A673 (cell line): ENCODE measurements at regions of chr2 and their contacts with region 1.

Region 1: GRCh38 chr2:181592648-181593047 is 64.3 kb downstream of the CERKL start:
- DNase-seq: no peak
- H3K4me3 ChIP-seq: no peak overlapping the region
- H3K27ac ChIP-seq: no peak overlapping the region
- H3K4me1 ChIP-seq: no peaks in the 10 kb centered on the region
- H3K27me3 ChIP-seq: no peaks in the 10 kb centered on the region
- CTCF ChIP-seq: no peak

Region 2: DNA sequence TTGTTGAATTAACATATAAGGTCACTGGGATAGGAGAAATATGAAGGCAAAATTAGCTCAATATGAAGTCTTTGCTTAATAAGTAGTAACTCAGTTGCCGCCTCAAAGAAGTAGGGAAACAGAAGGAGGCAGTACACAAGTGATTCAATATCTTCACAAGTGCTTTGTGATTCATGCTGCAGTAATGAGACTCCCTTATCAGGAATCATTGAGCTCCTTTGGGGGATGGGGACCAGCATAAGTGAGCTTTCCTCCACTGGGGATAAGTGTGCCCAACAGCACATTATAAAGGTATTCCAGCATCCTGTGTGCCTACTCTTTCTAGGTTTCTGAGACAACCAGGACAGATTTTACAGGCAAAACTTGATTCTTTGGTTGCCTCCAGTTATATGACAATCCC is 935.6 kb before region 1 on chr2:
- CTCF ChIA-PET with region 1: interaction called, 12 read pairs
- POLR2A ChIA-PET with region 1: no interaction called
- intact Hi-C with region 1: no loop called
- DNase-seq: no peak
- H3K4me3 ChIP-seq: no peak overlapping the region
- H3K27ac ChIP-seq: no peak overlapping the region
- H3K4me1 ChIP-seq: no peaks in the 10 kb centered on the region
- H3K27me3 ChIP-seq: no peaks in the 10 kb centered on the region
- CTCF ChIP-seq: no peak

Region 3: DNA sequence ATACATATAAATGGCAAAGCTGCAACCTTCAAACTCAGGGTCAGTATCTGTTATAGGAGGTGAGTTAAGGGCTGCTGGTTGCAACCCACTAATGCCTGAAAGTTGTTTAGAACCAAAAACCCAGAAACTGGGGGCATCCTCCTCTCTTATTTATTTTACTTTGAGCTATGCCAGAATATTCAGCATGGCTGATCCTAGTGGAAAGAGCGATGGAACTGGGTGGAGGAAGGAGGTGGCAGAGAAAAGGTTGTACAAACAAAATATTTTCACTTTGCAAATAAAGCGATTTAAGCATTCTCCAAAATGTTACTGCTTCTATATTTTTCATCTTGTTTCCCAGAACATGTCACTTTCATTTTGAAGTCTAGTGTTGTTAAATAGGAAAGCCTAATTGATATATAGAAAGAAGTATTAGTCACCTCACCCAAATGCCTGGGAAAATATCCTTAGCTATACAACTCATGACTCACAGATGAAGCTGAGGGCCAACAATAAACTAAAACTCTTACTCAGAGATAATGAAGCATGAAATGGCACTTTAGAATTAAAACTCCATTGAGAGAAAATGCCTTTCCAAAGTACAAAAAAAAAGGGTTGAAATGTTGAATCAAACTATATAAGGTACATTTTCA is 863.6 kb before region 1 on chr2:
- CTCF ChIA-PET with region 1: no interaction called
- POLR2A ChIA-PET with region 1: no interaction called
- intact Hi-C with region 1: no loop called
- DNase-seq: peak; percentile 70
- H3K4me3 ChIP-seq: no peak overlapping the region
- H3K27ac ChIP-seq: no peak overlapping the region
- H3K4me1 ChIP-seq: peaks cover 15% of the 10 kb centered on the region
- H3K27me3 ChIP-seq: no peaks in the 10 kb centered on the region
- CTCF ChIP-seq: no peak

Region 4: DNA sequence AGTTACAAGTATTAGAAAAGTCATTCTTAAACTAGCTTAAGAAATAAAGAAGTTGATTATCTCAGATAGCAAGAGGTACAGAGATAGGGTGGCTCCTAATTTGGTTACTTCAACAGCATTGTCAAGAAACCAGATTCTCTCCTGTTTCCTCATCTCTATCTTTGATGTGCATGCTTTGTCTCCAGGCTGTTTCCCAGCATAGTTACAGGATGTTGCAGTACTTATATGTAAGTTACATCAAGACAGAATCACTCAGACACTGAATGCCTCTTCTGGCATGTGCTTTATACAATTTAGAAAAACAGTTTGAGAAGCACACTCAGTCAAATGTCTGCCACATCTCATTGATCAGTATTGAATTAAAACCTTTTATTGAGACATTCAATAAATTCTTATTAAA is 801.8 kb before region 1 on chr2:
- CTCF ChIA-PET with region 1: no interaction called
- POLR2A ChIA-PET with region 1: no interaction called
- intact Hi-C with region 1: no loop called
- DNase-seq: no peak
- H3K4me3 ChIP-seq: no peak overlapping the region
- H3K27ac ChIP-seq: no peak overlapping the region
- H3K4me1 ChIP-seq: no peaks in the 10 kb centered on the region
- H3K27me3 ChIP-seq: peaks cover 4% of the 10 kb centered on the region
- CTCF ChIP-seq: no peak

Region 5: GRCh38 chr2:181305301-181306123 is 287.1 kb before region 1 on chr2:
- CTCF ChIA-PET with region 1: no interaction called
- POLR2A ChIA-PET with region 1: no interaction called
- intact Hi-C with region 1: no loop called
- DNase-seq: no peak
- H3K4me3 ChIP-seq: no peak overlapping the region
- H3K27ac ChIP-seq: no peak overlapping the region
- H3K4me1 ChIP-seq: no peaks in the 10 kb centered on the region
- H3K27me3 ChIP-seq: no peaks in the 10 kb centered on the region
- CTCF ChIP-seq: no peak